Colonic mucosa (tissue), 4 donors: ENCODE measurements at regions of chr21 and their contacts with region 1.

Region 1: GRCh38 chr21:31659536-31660258 is at the start of gene SOD1:
- DNase-seq: peak; percentile 97
- H3K4me3 ChIP-seq: peak within 1 kb of the TSS; percentile 80
- H3K27ac ChIP-seq: peak within 1 kb of the TSS; percentile 91
- H3K4me1 ChIP-seq: peaks cover 7% of the 10 kb centered on the region
- H3K27me3 ChIP-seq: no peaks in the 10 kb centered on the region
- CTCF ChIP-seq: no peak
- total RNA-seq, gene SOD1: 320 to 322 TPM

Region 2: GRCh38 chr21:31184459-31184858 is 475.2 kb before region 1 on chr21:
- intact Hi-C with region 1: no loop called
- DNase-seq: no peak
- H3K4me3 ChIP-seq: no peak overlapping the region
- H3K27ac ChIP-seq: no peak overlapping the region
- H3K4me1 ChIP-seq: no peaks in the 10 kb centered on the region
- H3K27me3 ChIP-seq: no peaks in the 10 kb centered on the region
- CTCF ChIP-seq: no peak

Region 3: DNA sequence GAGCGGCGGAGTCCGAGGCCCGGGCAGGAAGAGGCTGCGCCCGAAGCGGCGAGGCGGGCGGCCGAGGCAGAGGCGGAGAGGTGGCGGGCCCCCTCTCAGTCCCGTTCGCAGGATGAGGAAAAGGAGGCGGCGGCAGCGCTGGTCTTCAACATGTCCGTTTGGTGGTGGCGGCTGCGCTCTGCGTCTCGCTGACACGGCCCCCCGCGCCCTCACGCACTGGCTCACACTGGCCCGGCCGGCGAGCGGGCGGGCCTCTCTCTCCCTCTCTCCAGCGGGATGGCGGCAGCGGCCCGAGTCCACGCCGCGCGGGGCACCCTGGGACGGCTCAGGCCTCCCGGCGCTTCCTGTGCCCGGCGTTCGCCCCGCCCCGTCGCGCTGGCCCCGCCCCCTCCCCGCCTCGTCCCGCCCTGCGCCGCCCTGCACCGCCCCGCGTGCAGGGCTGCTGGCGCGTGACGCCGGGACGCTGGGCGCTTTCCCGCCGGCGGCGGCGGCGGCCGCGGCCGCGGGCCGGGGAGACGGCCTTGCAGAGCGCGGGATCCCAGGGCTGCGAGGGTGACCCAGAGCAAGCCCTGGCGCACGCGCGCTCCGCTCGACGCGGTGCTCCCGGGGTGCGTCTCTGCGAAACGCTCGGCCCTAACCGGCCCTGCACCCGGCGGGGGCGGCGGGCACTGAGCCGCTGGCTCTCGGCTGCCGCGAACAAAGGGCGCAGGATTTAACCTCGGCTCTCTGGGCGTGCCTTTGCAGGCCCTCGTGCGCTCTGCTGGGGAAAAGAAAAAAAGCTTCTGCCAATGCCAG is 72.3 kb after region 1 on chr21 and contains the start of gene SCAF4:
- intact Hi-C with region 1: loop called (anchors 5 kb)
- DNase-seq: peak; percentile 92
- H3K4me3 ChIP-seq: peak within 1 kb of the TSS; percentile 96
- H3K27ac ChIP-seq: peak within 1 kb of the TSS; percentile 97
- H3K4me1 ChIP-seq: peaks cover 24% of the 10 kb centered on the region
- H3K27me3 ChIP-seq: no peaks in the 10 kb centered on the region
- CTCF ChIP-seq: no peak
- total RNA-seq, gene SCAF4: 35.1 to 35.9 TPM

Region 4: DNA sequence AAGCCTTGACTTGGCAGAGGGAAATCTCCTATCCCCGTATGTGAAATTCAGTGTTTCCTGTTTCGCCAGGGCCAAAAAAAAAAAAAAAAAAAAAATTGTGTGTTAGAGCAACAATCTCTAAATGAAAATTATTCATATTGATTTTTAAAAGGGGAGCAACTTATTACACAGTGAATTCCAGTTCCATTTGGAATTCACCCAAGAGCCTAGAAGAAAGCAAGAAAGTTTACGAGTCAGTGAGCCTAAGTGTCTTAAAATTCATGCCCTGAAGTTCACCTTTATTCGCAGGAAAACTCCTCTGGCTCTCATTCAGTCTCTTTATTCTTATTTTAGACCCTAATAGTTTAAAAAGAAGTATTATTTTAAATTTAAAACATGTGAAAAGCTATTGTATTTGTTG is 171.0 kb after region 1 on chr21:
- intact Hi-C with region 1: no loop called
- DNase-seq: no peak
- H3K4me3 ChIP-seq: no peak overlapping the region
- H3K27ac ChIP-seq: no peak overlapping the region
- H3K4me1 ChIP-seq: no peaks in the 10 kb centered on the region
- H3K27me3 ChIP-seq: no peaks in the 10 kb centered on the region
- CTCF ChIP-seq: no peak